GM18951 (cell line): ENCODE measurements at regions of chr6 and their contacts with region 1.

Region 1: DNA sequence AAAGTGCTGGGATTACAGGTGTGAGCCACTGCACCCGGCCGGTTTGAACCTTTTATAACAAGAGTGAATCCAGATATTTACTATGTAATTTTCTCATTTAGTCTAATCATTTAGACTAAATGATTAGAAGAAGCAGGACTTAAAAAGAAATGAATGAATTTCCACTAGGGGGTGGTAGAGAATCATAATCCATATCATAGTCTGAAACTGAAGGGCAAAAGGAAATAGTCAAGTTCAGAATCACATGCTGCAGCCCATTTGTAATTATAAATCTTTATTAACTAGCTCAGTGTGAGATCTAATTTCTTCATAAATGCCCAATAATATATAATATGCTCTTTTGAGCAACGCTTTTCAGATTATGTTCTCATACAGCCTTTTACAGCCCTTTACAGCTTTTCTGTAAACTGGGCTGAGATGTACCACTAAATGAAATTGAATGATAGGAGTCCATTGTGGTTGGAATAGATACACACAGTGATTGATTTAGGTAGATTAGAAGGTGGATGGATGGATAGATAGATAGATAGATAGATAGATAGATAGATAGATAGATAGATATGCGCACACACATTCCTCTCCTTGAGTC is 31.8 kb downstream of the PSMB9 start:
- POLR2A ChIP-seq: no peak

Region 2: DNA sequence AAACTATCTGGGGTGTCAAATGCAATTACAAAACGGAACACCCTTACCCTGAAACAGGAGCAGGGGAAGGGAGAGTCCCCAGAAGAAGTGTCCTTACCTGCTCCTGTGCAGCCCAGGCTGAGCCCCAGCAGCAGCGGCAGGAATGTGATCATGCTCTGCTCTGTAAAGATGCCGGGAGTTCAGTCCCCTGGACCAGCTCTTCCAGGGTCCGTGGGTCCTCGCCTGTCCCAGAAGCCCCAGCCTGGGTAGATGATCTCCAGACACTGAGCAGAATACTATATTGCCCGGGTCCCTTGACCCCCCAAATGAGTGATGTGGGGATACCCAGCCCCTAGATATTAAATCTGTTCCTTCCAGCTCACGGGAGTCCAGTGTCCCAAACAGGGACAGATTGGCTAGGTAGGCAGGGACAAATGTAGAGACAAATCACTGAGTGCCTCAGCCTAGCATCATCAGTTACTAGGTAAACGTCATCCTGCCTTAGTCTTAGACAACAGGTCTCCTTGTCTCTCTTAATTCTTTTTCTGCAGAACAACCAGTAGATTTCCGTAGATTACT is 54.9 kb after region 1 on chr6 and contains the start of gene HLA-DMB:
- in situ Hi-C with region 1: loop called (anchors 5 kb)
- POLR2A ChIP-seq: peak; percentile 73

Region 3: GRCh38 chr6:32971581-32972352 is 86.0 kb after region 1 on chr6:
- in situ Hi-C with region 1: loop called (anchors 5 kb)
- POLR2A ChIP-seq: peak; percentile 100